Activated CD4-positive, alpha-beta T cell treated with anti-CD3 and anti-CD28 coated beads for 36 hours (primary cell): ENCODE measurements at regions of chr14 and their contacts with region 1.

Region 1: DNA sequence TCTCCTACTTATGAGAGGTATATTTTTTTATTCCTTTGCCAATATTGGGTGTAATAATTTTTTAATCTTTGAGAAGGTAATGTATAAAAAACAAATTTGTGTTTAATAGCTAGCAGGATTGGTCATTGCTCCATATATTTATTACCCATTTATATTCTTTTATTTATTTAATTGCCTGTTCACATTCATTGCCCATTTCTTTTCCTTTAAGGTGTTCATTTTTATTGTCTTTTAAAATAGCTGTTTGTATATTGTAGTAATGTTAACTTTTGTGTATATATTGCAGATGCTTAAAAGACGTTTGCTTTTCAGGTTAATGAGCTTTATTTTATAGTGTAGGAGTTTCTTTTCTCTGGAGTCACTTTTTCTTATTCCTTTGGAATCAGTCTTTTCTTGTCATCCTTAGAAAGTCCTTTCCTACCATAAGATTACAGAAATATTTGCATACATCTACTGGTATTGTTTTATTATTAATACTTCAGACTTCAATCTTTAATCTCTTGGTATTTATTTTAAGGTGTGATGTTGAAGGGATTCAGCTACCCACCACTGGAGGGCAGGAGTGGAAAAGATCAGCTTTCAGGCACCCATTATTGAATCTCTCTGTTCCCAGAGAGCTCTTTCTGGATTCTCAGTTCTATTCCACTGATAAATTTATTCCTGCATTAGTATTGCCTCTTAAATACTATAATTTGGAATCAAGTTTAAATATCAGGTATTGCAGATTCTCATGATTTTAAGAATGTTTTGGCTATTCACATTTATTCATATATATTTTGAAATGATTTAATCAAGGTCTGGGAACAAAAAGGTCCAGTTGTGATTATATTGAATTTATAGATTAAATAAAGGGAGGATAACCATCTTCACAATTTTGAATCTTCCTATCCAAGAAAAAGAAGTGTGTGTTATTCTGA is 17.3 kb downstream of the PPM1A start:
- DNase-seq: peak; percentile 32
- ATAC-seq: peak; percentile 68
- H3K4me3 Mint-ChIP-seq: no peak overlapping the region
- H3K27ac Mint-ChIP-seq: no peak overlapping the region
- H3K4me1 Mint-ChIP-seq: peaks cover 28% of the 10 kb centered on the region
- H3K27me3 Mint-ChIP-seq: no peaks in the 10 kb centered on the region

Region 2: DNA sequence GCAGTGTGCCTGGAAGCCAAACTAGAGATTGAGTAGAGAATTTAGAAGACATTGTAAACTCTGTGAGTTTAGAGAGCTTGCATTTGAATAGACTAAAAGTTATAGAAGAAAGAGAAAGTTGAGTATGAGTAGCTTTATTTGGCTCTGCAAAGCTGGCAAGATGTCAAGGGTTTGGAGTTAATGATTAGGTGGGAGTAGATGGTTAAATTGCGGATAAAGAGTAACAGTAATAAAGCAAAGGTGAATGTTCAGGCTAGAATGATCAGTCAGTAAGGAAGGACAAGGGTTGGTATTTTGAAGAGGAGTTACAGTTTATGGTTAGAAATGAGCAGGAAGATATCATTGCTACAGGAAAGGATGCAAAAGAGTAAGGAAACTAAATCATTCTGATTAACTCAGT is 12.1 kb before region 1 on chr14:
- CTCF ChIA-PET with region 1: interaction called, 20 read pairs
- POLR2A ChIA-PET with region 1: interaction called, 3 read pairs
- intact Hi-C with region 1: no loop called
- DNase-seq: no peak
- ATAC-seq: no peak
- H3K4me3 Mint-ChIP-seq: no peak overlapping the region
- H3K27ac Mint-ChIP-seq: no peak overlapping the region
- H3K4me1 Mint-ChIP-seq: peaks cover 59% of the 10 kb centered on the region
- H3K27me3 Mint-ChIP-seq: no peaks in the 10 kb centered on the region

Region 3: GRCh38 chr14:60276342-60276741 is 10.1 kb after region 1 on chr14:
- CTCF ChIA-PET with region 1: interaction called, 15 read pairs
- POLR2A ChIA-PET with region 1: no interaction called
- intact Hi-C with region 1: no loop called
- DNase-seq: no peak
- ATAC-seq: no peak
- H3K4me3 Mint-ChIP-seq: no peak overlapping the region
- H3K27ac Mint-ChIP-seq: no peak overlapping the region
- H3K4me1 Mint-ChIP-seq: peaks cover 52% of the 10 kb centered on the region
- H3K27me3 Mint-ChIP-seq: no peaks in the 10 kb centered on the region